ENCODE measurements at regions of chr10 and their contacts with region 1.

Region 1: GRCh38 chr10:100508691-100509150 is 10.9 kb downstream of the SEC31B start:
- DNase-seq: peak; percentile 66
- ATAC-seq: peak; percentile 89
- H3K4me3 ChIP-seq: no peak overlapping the region
- H3K27ac ChIP-seq: no peak overlapping the region
- H3K4me1 ChIP-seq: no peaks in the 10 kb centered on the region; the same call in 1 of the 2 replicates
- H3K27me3 ChIP-seq: no peaks in the 10 kb centered on the region
- CTCF ChIP-seq: peak; percentile 82
- POLR2A ChIP-seq: no peak
- RAD21 ChIP-seq: peak; percentile 84

Region 2: DNA sequence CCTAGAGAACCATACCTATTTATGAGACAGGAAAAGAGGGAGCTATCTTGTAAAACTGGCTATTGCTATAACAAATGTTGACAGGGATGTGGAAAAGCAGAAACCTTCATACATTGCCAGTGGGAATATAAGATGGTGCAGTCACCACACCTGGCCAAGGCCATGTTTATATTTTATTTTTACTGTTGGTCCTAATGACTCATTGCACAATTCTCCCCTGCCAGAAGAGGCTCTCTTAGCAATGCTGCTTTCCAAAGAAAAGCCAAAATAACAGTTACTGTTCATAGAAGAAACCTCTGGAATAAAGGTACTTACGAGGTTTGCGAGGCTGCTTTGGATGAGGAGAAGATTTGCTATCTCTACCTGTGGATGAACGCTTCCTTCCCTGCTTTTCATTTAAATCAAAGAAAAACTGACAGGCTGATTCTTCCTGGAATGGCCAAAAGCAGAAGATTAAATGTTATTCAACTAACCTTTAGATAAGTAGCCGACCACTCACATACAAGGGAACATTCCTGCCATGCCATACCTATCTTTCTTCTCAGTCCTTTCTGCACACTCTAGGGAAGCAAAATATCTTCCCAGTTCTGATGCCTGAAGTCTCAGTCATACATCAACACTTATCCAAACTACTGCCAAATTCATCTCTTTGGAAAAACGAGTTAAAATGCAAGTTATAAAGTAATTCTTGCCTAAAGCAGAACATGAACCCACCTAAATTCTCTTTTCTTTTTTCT is 263.1 kb before region 1 on chr10:
- CTCF ChIA-PET with region 1: no interaction called
- POLR2A ChIA-PET with region 1: no interaction called
- dilution Hi-C with region 1: no loop called
- in situ Hi-C with region 1: no loop called
- intact Hi-C with region 1: no loop called
- DNase-seq: peak; percentile 33
- ATAC-seq: peak; percentile 69
- H3K4me3 ChIP-seq: no peak overlapping the region
- H3K27ac ChIP-seq: no peak overlapping the region
- H3K4me1 ChIP-seq: no peaks in the 10 kb centered on the region
- H3K27me3 ChIP-seq: no peaks in the 10 kb centered on the region
- CTCF ChIP-seq: no peak
- POLR2A ChIP-seq: no peak
- RAD21 ChIP-seq: no peak

Region 3: GRCh38 chr10:100303724-100304319 is 204.9 kb before region 1 on chr10:
- CTCF ChIA-PET with region 1: no interaction called
- POLR2A ChIA-PET with region 1: no interaction called
- dilution Hi-C with region 1: no loop called
- in situ Hi-C with region 1: no loop called
- intact Hi-C with region 1: loop called (anchors 10 kb)
- DNase-seq: peak; percentile 30
- ATAC-seq: peak; percentile 81
- H3K4me3 ChIP-seq: no peak overlapping the region
- H3K27ac ChIP-seq: no peak overlapping the region
- H3K4me1 ChIP-seq: no peaks in the 10 kb centered on the region
- H3K27me3 ChIP-seq: peaks cover 16% of the 10 kb centered on the region
- CTCF ChIP-seq: peak; percentile 64
- POLR2A ChIP-seq: no peak
- RAD21 ChIP-seq: peak; percentile 65

Region 4: GRCh38 chr10:100327007-100327717 is 181.6 kb before region 1 on chr10:
- CTCF ChIA-PET with region 1: no interaction called
- POLR2A ChIA-PET with region 1: no interaction called
- dilution Hi-C with region 1: no loop called
- in situ Hi-C with region 1: no loop called
- intact Hi-C with region 1: no loop called
- DNase-seq: peak; percentile 10
- ATAC-seq: no peak
- H3K4me3 ChIP-seq: no peak overlapping the region
- H3K27ac ChIP-seq: no peak overlapping the region
- H3K4me1 ChIP-seq: no peaks in the 10 kb centered on the region
- H3K27me3 ChIP-seq: peaks cover 45% of the 10 kb centered on the region
- CTCF ChIP-seq: no peak
- POLR2A ChIP-seq: no peak
- RAD21 ChIP-seq: no peak

Region 5: DNA sequence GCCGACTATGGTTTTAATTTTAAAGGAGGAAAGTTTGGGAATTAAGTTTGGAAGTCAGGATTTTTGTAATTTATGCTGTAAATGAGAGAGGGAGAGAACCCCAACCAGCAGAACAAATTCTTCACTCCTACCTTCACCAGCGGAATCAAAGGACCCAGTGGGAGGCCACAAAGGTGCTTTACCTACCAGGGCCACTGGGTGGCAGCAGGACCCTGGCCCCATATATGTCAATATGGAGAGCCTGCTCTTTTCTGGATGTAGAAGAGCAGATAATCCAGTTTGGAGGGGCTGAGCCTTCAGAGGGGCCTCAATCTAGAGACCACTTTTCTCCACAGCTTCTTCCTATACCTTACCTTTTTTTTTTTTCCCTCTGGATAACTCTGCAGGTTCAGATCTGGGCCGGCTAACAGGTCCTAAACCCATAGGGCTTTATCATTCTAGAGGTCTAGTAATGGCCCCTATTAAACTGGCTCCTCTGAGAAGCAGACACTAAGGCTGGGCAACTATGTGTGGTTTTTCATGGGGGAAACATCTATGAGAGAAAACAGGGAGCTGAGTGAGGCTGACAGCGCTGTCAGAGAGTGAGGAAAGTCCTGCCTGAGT is 170.2 kb before region 1 on chr10:
- CTCF ChIA-PET with region 1: interaction called, 3 read pairs
- POLR2A ChIA-PET with region 1: no interaction called
- dilution Hi-C with region 1: no loop called
- in situ Hi-C with region 1: loop called (anchors 5 kb)
- intact Hi-C with region 1: loop called (anchors 1 kb)
- DNase-seq: peak; percentile 45
- ATAC-seq: peak; percentile 81
- H3K4me3 ChIP-seq: no peak overlapping the region
- H3K27ac ChIP-seq: no peak overlapping the region
- H3K4me1 ChIP-seq: peaks cover 8% of the 10 kb centered on the region; the same call in 1 of the 2 replicates
- H3K27me3 ChIP-seq: peaks cover 18% of the 10 kb centered on the region
- CTCF ChIP-seq: peak; percentile 95
- POLR2A ChIP-seq: no peak
- RAD21 ChIP-seq: peak; percentile 97

Region 6: GRCh38 chr10:100433253-100434240 is 75.2 kb before region 1 on chr10:
- CTCF ChIA-PET with region 1: interaction called, 8 read pairs
- POLR2A ChIA-PET with region 1: interaction called, 10 read pairs
- dilution Hi-C with region 1: no loop called
- in situ Hi-C with region 1: loop called (anchors 5 kb)
- intact Hi-C with region 1: loop called (anchors 1 kb)
- DNase-seq: peak; percentile 89
- ATAC-seq: peak; percentile 99
- H3K4me3 ChIP-seq: no peak overlapping the region
- H3K27ac ChIP-seq: no peak overlapping the region
- H3K4me1 ChIP-seq: no peaks in the 10 kb centered on the region
- H3K27me3 ChIP-seq: peaks cover 3% of the 10 kb centered on the region; the same call in 1 of the 2 replicates
- CTCF ChIP-seq: peak; percentile 100; the same call in 1 of the 2 replicates
- POLR2A ChIP-seq: peak; percentile 66; the same call in 1 of the 2 replicates
- RAD21 ChIP-seq: peak; percentile 99

Region 7: DNA sequence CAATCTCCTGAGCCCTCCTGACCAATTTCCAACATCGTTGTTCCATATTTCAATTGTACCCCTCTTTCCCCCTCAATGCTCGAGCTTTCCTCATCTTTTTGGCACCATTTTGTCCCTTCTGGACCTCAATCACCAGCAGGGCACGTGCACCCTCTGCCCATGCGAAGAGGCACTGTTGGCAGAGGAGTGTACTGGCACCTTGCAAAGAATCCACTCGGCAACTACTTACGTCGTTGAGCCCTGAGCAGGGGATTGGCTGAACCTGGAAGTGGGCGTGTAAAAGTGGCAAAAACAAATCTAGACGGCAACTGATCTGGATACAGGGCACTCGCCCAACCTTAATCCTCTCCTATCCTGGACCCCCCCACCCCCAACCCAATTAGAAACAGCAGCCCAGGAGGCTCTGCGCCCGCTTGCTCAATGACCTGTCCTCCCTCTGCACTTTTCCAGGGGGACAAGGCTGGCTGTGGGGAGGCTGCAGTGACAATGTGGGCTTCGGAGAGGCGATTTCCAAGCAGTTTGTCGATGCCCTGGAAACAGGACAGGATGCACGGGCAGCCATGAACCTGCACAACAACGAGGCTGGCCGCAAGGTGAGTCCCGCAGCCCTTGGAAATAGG is 27.1 kb before region 1 on chr10:
- CTCF ChIA-PET with region 1: interaction called, 15 read pairs
- POLR2A ChIA-PET with region 1: interaction called, 7 read pairs
- dilution Hi-C with region 1: no loop called
- in situ Hi-C with region 1: no loop called
- intact Hi-C with region 1: loop called (anchors 1 kb)
- DNase-seq: peak; percentile 81
- ATAC-seq: peak; percentile 95
- H3K4me3 ChIP-seq: peak overlapping the region; percentile 38
- H3K27ac ChIP-seq: no peak overlapping the region
- H3K4me1 ChIP-seq: peaks cover 4% of the 10 kb centered on the region; the same call in 1 of the 2 replicates
- H3K27me3 ChIP-seq: peaks cover 36% of the 10 kb centered on the region
- CTCF ChIP-seq: no peak
- POLR2A ChIP-seq: no peak
- RAD21 ChIP-seq: no peak

Region 8: GRCh38 chr10:100518761-100519241 is 10.1 kb after region 1 on chr10:
- CTCF ChIA-PET with region 1: interaction called, 25 read pairs
- POLR2A ChIA-PET with region 1: interaction called, 6 read pairs
- dilution Hi-C with region 1: no loop called
- in situ Hi-C with region 1: no loop called
- intact Hi-C with region 1: no loop called
- DNase-seq: peak; percentile 70
- ATAC-seq: peak; percentile 67
- H3K4me3 ChIP-seq: no peak overlapping the region
- H3K27ac ChIP-seq: no peak overlapping the region
- H3K4me1 ChIP-seq: peaks cover 5% of the 10 kb centered on the region; the same call in 1 of the 2 replicates
- H3K27me3 ChIP-seq: no peaks in the 10 kb centered on the region
- CTCF ChIP-seq: peak; percentile 72
- POLR2A ChIP-seq: no peak
- RAD21 ChIP-seq: peak; percentile 66

Measured in IMR-90 (cell line).